CD14-positive monocyte (primary cell): ENCODE measurements at regions of chr15 and their contacts with region 1.

Region 1: GRCh38 chr15:89575146-89575655 is at the start of gene TICRR:
- DNase-seq: peak; percentile 98 to 99 (median 98)
- H3K4me3 ChIP-seq: peak within 1 kb of the TSS; percentile 66 to 97 (median 87)
- H3K4me3 Mint-ChIP-seq: peak within 1 kb of the TSS; percentile 86 to 94
- H3K27ac ChIP-seq: peak within 1 kb of the TSS in 1 of 2 donors; percentile 50
- H3K27ac Mint-ChIP-seq: peak within 1 kb of the TSS in 6 of 7 donors; percentile 35 to 78 (median 58)
- H3K4me1 ChIP-seq: peaks cover 24 to 35% of the 10 kb centered on the region in 2 donors
- H3K4me1 Mint-ChIP-seq: peaks cover 38% of the 10 kb centered on the region
- H3K27me3 ChIP-seq: peaks cover 0 to 5% of the 10 kb centered on the region in 2 donors
- H3K27me3 Mint-ChIP-seq: peaks cover 9 to 21% (median 19%) of the 10 kb centered on the region in 3 donors
- CTCF ChIP-seq: no peak
- polyA plus RNA-seq, gene TICRR: not detected

Region 2: DNA sequence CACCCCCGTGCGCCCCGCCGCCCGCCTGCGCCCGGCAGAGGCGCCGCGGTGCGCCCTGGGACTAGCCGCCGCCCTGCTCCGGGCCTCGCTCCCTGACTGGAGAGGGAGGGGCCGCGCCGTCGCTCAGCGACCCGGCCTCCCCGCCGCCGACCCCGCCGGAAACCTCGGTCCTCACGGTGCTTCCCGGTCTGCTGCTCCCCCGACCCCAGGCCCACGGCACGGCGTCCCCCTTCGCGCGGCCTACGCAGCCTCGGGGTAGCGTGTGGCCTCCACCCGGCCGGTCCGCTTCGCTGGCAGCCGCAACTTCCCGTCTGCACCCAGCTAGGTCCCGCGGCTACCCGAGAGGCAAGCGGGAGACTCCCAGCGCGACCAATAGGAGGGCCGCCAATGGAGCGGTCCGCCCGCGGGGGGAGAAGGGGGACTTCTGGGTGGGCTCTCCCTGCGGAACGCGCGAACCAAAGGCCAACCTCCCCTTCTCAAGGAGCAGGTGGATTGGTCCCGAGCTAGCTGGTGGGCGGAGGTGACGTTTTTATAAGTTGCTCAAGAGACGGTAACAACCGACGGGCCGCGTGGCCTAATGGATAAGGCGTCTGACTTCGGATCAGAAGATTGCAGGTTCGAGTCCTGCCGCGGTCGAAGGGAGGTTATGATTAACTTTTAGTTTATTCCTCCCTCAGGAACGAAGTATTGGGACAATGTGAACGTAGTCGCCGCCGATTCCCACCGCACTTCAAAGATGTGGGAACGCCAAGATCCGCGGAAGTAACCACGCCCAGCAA is 240.5 kb before region 1 on chr15 and contains the start of gene POLG:
- intact Hi-C with region 1: loop called in 1 of 2 experiments (anchors 10 kb)
- DNase-seq: peak; percentile 99 to 100 (median 99)
- H3K4me3 ChIP-seq: peak within 1 kb of the TSS; percentile 82 to 90 (median 85)
- H3K4me3 Mint-ChIP-seq: peak within 1 kb of the TSS; percentile 79 to 82
- H3K27ac ChIP-seq: peak within 1 kb of the TSS; percentile 59 to 85
- H3K27ac Mint-ChIP-seq: peak within 1 kb of the TSS; percentile 79 to 86 (median 82)
- H3K4me1 ChIP-seq: peaks cover 31 to 44% of the 10 kb centered on the region in 2 donors
- H3K4me1 Mint-ChIP-seq: peaks cover 38% of the 10 kb centered on the region
- H3K27me3 ChIP-seq: peaks cover 0 to 5% of the 10 kb centered on the region in 2 donors
- H3K27me3 Mint-ChIP-seq: peaks cover 13 to 27% (median 18%) of the 10 kb centered on the region in 3 donors
- CTCF ChIP-seq: no peak
- polyA plus RNA-seq, gene POLG: 19.2 to 66.7 (median 21.6) TPM

Region 3: DNA sequence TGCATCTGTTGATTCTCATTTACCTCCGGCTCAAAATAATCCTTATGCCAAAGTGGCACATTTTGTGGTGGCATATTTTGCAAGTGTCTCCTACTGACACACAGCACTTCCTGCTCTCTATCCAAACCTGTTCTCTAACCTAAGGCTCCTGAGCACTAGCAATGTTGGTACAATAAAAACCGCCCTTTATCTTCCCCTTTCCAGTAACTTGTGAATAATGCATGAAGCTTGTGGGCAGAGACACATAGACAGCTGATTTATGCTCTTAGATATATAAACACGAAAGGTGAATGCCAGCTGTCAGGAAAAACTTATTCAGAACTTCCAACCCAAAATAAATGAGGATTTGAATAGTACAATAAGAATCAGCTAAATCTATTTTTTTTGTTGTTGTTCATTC is 372.2 kb after region 1 on chr15:
- intact Hi-C with region 1: no loop called
- DNase-seq: no peak
- H3K4me3 ChIP-seq: no peak overlapping the region
- H3K4me3 Mint-ChIP-seq: no peak overlapping the region
- H3K27ac ChIP-seq: no peak overlapping the region
- H3K27ac Mint-ChIP-seq: no peak overlapping the region
- H3K4me1 ChIP-seq: no peaks in the 10 kb centered on the region
- H3K4me1 Mint-ChIP-seq: no peaks in the 10 kb centered on the region
- H3K27me3 ChIP-seq: no peaks in the 10 kb centered on the region
- H3K27me3 Mint-ChIP-seq: peaks cover 0 to 3% (median 0%) of the 10 kb centered on the region in 3 donors
- CTCF ChIP-seq: no peak

Region 4: DNA sequence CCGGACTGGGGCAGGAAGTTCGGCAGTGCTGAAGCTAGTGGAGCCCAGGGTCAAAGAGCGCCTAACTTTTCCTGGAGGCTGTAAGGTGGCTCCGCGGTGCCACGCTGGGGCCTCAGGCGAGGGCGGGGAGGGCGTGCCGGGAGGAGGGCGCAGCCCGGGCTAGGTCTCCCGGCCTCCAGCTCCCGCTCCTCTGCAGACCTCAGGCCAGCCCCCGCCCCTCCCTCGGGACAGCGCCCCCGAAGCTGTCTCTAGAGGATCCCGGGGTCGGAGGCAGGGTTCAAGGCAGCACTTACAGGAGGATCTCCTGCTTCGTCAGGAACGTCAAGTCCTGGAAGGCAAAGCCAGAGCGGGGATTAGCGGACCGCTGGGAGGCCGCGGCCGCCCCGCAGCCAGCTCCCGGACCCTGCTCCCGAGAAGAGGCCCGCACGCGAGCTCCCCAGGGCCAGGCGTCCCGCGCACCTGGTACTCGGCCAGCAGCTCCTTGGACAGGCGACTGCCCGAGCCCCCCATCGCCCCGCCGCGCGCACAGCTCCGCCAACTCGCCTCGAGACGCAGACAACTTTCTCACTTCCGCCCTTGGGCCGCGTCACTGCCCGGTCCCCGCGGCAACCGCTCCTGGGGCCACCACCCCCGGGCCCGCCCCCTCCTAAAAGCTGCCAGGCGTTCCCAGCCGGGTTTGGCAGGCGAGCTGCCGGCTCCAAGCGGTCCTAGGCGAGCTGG is 658.3 kb after region 1 on chr15 and contains the start of gene CIB1:
- intact Hi-C with region 1: loop called in 1 of 2 experiments (anchors 10 kb)
- DNase-seq: peak; percentile 97 to 98 (median 98)
- H3K4me3 ChIP-seq: peak within 1 kb of the TSS; percentile 73 to 96 (median 91)
- H3K4me3 Mint-ChIP-seq: peak within 1 kb of the TSS; percentile 80 to 90
- H3K27ac ChIP-seq: peak within 1 kb of the TSS; percentile 78 to 95
- H3K27ac Mint-ChIP-seq: peak within 1 kb of the TSS; percentile 88 to 96 (median 93)
- H3K4me1 ChIP-seq: peaks cover 41 to 47% of the 10 kb centered on the region in 2 donors
- H3K4me1 Mint-ChIP-seq: peaks cover 40% of the 10 kb centered on the region
- H3K27me3 ChIP-seq: no peaks in the 10 kb centered on the region
- H3K27me3 Mint-ChIP-seq: peaks cover 0 to 1% (median 0%) of the 10 kb centered on the region in 3 donors
- CTCF ChIP-seq: peak; percentile 66
- polyA plus RNA-seq, gene CIB1: 77.5 to 197 (median 169) TPM